Tibial artery (tissue), 4 donors: ENCODE measurements at regions of chr11 and their contacts with region 1.

Region 1: DNA sequence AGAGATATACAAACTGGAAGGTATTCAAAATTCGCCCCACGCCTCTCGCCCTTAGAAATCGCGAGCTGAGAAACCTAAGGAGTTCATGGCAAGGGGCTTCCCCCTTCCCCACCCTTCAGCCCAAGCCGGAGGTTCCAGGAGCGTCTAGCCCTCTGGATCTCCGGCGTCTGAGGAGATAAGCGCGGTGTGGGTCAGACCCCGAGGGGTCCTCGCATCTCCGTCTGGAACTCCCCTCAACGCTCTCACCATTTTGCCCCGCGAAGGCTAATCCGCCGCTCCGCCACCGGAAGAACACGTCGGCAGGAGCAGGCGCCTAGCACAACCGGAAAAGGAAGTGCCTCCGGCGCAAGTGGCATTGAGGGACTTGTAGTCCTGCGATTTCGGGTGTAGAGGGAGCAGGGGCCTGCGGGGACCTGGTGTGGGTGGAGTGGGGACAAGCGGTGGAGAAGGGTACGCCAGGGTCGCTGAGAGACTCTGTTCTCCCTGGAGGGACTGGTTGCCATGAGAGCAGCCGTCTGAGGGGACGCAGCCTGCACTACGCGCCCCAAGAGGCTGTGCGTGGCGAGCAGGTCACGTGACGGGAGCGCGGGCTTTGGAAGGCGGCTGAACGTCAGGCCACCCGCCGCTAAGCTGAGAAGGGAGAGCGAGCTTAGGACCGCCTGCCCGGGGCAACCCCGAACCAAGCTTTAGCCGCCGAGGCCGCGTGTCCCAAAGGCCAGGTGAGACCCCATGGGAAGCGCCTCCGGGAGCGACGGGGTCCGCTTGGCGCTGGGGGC is at the starts of genes FEN1 and TMEM258:
- DNase-seq: peak; percentile 87 to 93
- H3K4me3 ChIP-seq: peak within 1 kb of the TSS; percentile 71 to 77
- H3K27ac ChIP-seq: peak within 1 kb of the TSS; percentile 88 to 89
- H3K4me1 ChIP-seq: peaks cover 0 to 28% (median 18%) of the 10 kb centered on the region in 4 donors
- H3K27me3 ChIP-seq: no peaks in the 10 kb centered on the region
- CTCF ChIP-seq: peak; percentile 21 to 35

Region 2: DNA sequence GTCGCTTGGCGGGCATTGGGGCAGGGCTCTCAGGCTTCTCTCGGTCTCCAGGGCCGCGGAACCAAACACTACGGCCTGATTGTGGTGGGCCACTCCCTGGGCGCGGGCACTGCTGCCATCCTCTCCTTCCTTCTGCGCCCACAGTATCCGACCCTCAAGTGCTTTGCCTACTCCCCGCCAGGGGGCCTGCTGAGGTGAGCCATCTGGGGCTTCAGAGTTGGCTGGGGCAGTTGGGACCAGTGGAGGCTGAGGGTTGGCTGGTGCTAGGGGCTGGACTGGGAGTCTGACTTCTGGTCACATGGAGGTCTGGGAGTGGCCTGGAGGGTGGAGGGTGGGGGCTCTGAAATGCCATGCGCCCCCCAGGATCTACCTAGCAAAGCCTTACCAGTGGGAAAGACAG is 55.4 kb before region 1 on chr11:
- intact Hi-C with region 1: no loop called
- DNase-seq: no peak
- H3K4me3 ChIP-seq: no peak overlapping the region
- H3K27ac ChIP-seq: no peak overlapping the region
- H3K4me1 ChIP-seq: peaks cover 0 to 15% (median 6%) of the 10 kb centered on the region in 4 donors
- H3K27me3 ChIP-seq: no peaks in the 10 kb centered on the region
- CTCF ChIP-seq: no peak

Region 3: GRCh38 chr11:61747192-61747966 is 45.1 kb before region 1 on chr11:
- intact Hi-C with region 1: no loop called
- DNase-seq: peak; percentile 65 to 82
- H3K4me3 ChIP-seq: no peak overlapping the region
- H3K27ac ChIP-seq: no peak overlapping the region
- H3K4me1 ChIP-seq: peaks cover 0 to 9% (median 2%) of the 10 kb centered on the region in 4 donors
- H3K27me3 ChIP-seq: peaks cover 0 to 29% of the 10 kb centered on the region in 2 donors
- CTCF ChIP-seq: peak; percentile 69 to 76

Region 4: DNA sequence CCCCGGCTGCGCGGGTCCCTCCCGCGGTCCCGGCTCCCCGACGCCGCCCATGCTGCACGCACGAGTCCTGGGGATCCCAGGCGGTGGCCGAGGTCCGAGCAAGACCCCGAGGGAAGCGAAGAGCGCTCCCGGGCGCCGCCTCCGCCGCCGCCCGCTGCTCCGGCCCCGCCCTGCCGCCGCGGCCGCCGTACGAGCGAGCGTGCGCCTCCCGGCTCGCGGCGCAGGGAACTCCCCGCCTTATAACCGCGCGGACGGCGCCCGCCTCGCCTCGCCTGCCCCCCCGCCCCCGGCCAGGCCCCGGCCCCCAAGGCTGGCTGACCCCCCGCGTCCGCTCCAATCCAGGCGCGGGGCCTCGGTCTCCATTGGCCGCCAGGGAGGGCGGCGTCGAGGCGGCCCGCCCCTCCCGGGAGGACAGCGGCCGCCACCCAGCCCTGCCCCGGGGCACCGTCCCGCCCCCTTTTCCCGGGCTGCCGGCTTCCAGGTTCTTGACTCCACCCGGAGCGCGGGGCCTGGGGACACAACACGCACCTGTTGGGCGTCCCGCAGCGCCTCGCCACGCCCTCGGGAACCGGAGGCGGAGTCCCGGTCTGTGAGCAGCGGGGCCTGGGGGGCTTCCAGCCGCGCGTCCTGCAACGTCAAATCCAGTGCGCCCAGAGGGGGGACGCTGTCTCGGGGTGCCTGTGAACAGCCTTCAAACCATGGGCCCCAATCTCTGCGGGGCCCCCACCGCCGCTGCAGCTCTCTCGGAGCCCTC is 99.0 kb after region 1 on chr11 and contains the start of gene FADS3:
- intact Hi-C with region 1: loop called (anchors 5 kb)
- DNase-seq: peak; percentile 88 to 96
- H3K4me3 ChIP-seq: peak within 1 kb of the TSS; percentile 85 to 96
- H3K27ac ChIP-seq: peak within 1 kb of the TSS; percentile 87 to 92
- H3K4me1 ChIP-seq: peaks cover 0 to 56% (median 47%) of the 10 kb centered on the region in 4 donors
- H3K27me3 ChIP-seq: no peaks in the 10 kb centered on the region
- CTCF ChIP-seq: no peak

Region 5: DNA sequence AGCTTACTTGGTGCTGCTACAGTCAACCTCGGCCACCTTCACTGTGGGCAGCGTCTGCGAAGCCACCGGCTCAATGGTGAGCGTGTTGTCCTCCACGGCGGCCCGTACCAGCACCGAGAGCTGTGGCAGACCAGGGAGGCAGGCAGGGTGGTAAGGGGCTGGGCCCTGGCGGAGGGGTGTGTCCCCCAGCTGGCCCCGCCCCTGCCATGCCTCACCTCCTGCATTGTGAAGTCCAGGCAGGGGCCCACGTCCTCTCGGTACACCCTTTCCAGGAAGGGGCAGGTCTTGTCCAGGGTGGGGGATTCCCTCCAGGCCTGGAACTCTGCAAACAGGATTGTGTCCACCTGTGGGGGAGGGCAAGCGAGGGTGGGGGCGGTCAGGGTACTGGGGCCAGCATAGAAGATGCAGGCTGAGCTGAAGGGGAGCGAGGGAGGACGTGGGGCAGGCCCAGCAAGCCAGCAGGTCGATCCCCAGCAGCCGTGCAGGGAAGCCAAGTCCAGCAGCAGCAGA is 112.1 kb after region 1 on chr11:
- intact Hi-C with region 1: no loop called
- DNase-seq: no peak
- H3K4me3 ChIP-seq: no peak overlapping the region
- H3K27ac ChIP-seq: no peak overlapping the region
- H3K4me1 ChIP-seq: no peaks in the 10 kb centered on the region
- H3K27me3 ChIP-seq: no peaks in the 10 kb centered on the region
- CTCF ChIP-seq: no peak

Region 6: GRCh38 chr11:61947486-61948210 is 155.2 kb after region 1 on chr11:
- intact Hi-C with region 1: loop called (anchors 5 kb)
- DNase-seq: peak; percentile 96 to 97
- H3K4me3 ChIP-seq: no peak overlapping the region
- H3K27ac ChIP-seq: peak overlapping the region; percentile 41 to 64
- H3K4me1 ChIP-seq: peaks cover 0 to 31% (median 22%) of the 10 kb centered on the region in 4 donors
- H3K27me3 ChIP-seq: no peaks in the 10 kb centered on the region
- CTCF ChIP-seq: peak; percentile 93

Region 7: DNA sequence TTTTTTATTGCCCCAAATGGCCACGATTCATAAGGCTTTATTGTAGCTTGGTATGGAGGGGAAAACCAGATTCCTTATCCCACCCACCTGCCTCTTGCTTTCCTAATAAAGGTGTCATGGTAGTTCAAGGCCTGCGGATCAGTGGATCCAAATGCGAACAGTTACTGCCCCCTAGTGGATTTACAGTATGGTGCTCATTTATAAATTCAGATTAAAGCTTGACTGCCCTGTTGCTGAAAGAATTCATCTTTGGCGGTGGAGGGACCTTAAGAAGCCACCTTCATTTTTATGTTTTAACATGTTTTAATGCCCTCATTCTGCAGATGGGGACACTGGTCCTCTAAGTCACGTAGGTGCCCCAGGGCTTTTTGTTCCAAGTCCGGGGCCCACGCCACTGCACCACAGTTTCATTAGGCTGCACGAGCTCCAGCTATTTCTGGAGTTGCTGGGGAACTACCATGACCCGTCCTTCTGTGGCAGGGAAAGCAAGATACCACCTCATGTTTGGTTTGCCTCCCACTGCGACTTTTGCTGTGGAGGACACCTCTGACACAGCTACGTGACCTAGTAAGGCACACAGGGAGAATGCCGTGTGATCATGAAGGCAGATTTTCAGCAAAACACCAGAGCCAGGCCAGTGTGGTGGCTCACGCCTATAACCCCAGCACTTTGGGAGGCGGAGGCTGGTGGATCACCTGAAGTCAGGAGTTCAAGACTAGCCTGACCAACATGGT is 315.7 kb after region 1 on chr11:
- intact Hi-C with region 1: loop called (anchors 10 kb)
- DNase-seq: no peak
- H3K4me3 ChIP-seq: no peak overlapping the region
- H3K27ac ChIP-seq: peak overlapping the region; percentile 44 to 86
- H3K4me1 ChIP-seq: peaks cover 0 to 56% (median 29%) of the 10 kb centered on the region in 4 donors
- H3K27me3 ChIP-seq: no peaks in the 10 kb centered on the region
- CTCF ChIP-seq: peak; percentile 83 to 88